IMR-90 (cell line): ENCODE measurements at regions of chr11 and their contacts with region 1.

Region 1: DNA sequence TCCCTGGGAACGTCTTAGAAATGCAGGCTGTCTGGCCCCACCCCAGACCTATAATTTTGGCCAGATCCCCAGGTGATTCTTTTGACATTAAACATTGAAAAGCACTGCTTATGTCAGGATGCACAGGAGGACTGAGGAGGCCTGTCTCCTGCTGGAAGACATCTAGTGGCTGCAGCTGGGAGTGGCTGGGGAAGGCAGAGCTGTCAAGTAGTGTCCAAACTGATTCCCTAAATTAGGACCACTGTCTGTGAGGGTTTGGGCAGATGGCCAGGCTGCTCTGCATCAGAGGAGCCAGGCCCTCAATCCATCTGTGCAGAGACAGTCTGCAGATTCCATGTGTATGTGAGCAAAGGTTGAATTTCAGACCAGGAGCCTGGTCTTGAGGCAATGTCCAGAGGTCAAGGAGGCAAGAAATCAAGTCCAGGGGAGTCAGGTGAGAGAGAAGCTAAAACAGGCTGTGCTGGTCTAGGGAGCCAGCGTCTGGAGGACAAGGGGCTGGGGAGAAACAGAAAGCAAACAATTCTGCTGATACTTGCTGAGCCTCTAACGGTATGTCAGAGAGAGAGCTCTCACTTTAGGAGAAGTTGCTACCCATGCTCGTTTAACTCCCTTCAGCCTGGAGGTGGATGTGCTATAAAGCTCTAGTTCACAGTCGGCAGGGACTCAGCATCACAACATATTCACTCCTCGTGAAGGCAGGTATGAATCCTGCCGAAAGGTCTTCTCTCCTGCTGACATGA is 15.3 kb upstream of the SYTL2 start:
- DNase-seq: peak; percentile 47
- ATAC-seq: peak; percentile 44; the same call in 1 of the 2 replicates
- H3K4me3 ChIP-seq: no peak overlapping the region
- H3K27ac ChIP-seq: peak overlapping the region; percentile 51
- H3K4me1 ChIP-seq: peaks cover 34% of the 10 kb centered on the region
- H3K27me3 ChIP-seq: no peaks in the 10 kb centered on the region
- CTCF ChIP-seq: peak; percentile 47
- POLR2A ChIP-seq: no peak
- RAD21 ChIP-seq: peak; percentile 54

Region 2: DNA sequence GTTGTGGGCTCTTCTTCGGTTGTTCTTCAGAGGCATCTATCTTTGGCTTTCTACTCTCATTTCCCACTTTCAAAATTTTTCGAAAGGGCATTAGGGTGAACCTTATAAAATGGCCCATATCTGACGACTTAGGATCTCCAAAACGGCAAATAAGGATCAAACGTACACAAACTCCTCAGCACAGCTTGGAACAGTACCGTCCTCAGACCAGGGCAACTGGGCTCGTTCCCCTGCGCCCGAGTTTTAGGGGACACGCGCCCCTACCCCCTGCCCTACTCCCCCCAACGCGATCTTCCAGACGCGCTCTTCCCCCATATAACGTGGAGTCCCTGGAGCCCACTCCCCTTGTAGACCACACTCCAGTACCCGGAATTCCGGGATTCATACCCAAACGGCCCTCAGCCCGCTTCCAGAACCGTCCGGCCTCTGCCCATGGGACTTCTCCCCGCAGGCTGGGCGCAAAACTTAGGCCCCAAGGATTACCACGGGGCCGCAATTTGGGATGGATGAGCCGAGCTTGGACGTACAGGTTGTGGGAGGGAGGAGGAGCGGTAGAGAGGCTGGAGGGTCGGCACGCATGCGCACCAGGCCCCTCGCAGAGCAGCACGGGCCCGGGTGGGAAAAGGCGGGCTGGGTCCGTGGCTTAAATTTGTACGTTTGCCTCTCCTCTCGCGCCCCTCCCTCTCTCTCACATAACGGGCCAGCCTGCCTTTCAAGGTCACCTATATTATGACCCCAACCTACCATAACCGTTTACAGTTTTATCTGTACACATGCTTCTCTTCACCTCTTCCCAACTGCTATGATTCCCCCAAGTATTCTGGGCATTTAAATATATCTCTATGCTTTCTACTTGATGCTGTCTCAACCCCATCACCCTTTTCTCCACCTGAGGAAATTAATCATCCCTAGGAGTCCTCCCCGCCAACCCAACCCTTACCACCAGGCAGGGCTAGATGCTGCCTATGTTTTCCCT is 143.7 kb before region 1 on chr11:
- CTCF ChIA-PET with region 1: interaction called, 3 read pairs
- POLR2A ChIA-PET with region 1: no interaction called
- dilution Hi-C with region 1: no loop called
- in situ Hi-C with region 1: loop called (anchors 10 kb)
- intact Hi-C with region 1: no loop called
- DNase-seq: peak; percentile 47
- ATAC-seq: peak; percentile 24; the same call in 1 of the 2 replicates
- H3K4me3 ChIP-seq: peak overlapping the region; percentile 89
- H3K27ac ChIP-seq: peak overlapping the region; percentile 78
- H3K4me1 ChIP-seq: peaks cover 2% of the 10 kb centered on the region; the same call in 1 of the 2 replicates
- H3K27me3 ChIP-seq: no peaks in the 10 kb centered on the region
- CTCF ChIP-seq: no peak
- POLR2A ChIP-seq: no peak
- RAD21 ChIP-seq: no peak

Region 3: DNA sequence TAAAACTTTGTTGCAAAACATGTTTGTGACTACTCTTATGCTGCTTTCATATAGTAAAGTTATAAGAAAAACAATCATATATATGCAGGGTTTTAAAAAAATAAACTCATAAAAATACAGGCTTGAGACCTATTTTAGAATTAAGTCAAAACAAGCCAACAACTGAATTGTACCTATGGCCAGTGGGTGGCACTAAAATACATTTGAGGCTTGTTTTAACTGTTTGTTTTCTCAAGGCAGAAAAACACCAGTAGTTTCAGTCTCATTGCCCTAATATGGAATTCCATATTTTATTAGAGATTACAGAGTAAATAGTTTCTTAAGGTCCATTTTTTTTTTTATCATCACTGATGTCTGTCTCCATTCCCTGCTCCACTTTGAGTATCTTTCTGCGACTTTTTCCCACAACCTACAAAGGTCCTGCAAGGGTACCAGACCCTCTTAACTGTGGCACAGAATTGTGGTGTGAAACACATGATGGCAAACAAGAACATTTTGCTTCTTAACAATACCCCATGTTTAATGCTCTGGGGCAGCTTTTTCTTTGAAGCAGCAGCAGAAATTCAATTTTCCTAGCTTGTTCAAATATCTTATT is 131.8 kb before region 1 on chr11:
- CTCF ChIA-PET with region 1: no interaction called
- POLR2A ChIA-PET with region 1: no interaction called
- dilution Hi-C with region 1: no loop called
- in situ Hi-C with region 1: loop called (anchors 10 kb)
- intact Hi-C with region 1: loop called (anchors 2 kb)
- DNase-seq: peak; percentile 71
- ATAC-seq: peak; percentile 69
- H3K4me3 ChIP-seq: no peak overlapping the region
- H3K27ac ChIP-seq: peak overlapping the region; percentile 63; the same call in 1 of the 2 replicates
- H3K4me1 ChIP-seq: peaks cover 6% of the 10 kb centered on the region
- H3K27me3 ChIP-seq: no peaks in the 10 kb centered on the region
- CTCF ChIP-seq: peak; percentile 67
- POLR2A ChIP-seq: no peak
- RAD21 ChIP-seq: peak; percentile 77

Region 4: DNA sequence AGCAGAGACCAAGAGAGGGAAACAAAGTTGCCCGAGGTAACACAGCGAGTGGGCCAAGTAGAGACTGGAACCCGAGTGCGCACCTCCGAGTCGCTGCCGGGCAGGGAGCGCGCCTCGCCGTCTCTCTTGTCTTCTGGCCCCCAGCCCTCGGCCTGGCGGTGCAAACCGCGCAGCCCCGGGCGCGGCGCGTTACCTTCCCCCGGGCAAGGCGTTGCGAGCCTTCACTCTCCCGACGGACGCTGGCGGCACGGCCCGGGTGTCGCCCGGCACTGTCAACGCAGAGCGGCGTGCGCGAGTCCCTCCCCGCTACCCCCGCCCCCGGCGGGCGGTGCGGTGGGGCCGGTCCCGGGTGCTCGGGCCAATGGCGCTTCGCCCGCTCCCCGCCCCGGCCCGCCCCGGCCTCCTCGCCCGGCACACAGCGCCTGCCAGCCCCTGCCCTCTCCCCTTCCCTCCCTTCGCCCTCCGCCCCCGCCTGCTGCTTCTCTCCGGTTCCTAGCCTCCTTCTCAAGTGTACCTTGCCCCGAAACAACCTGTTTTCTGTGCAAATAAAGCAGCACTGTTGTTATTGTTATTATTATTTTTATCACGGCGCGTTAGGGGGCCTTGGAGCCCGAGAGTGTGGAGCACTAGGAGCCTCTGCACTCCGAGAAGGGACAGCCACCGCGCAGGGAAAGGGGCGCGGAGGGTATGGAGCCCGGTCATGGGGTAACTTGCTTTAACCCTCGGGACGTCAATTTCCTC is 15.2 kb before region 1 on chr11 and contains the start of gene SYTL2:
- CTCF ChIA-PET with region 1: interaction called, 17 read pairs
- POLR2A ChIA-PET with region 1: no interaction called
- dilution Hi-C with region 1: no loop called
- in situ Hi-C with region 1: no loop called
- intact Hi-C with region 1: no loop called
- DNase-seq: peak; percentile 48
- ATAC-seq: peak; percentile 90
- H3K4me3 ChIP-seq: peak within 1 kb of the TSS; percentile 75
- H3K27ac ChIP-seq: peak within 1 kb of the TSS; percentile 40
- H3K4me1 ChIP-seq: peaks cover 16% of the 10 kb centered on the region
- H3K27me3 ChIP-seq: no peaks in the 10 kb centered on the region
- CTCF ChIP-seq: peak; percentile 3; the same call in 1 of the 2 replicates
- POLR2A ChIP-seq: peak; percentile 24; the same call in 1 of the 2 replicates
- RAD21 ChIP-seq: no peak
- total RNA-seq, gene SYTL2: 45.2 and 59.4 TPM in 2 replicates

Region 5: GRCh38 chr11:85977751-85978160 is 151.5 kb after region 1 on chr11:
- CTCF ChIA-PET with region 1: no interaction called
- POLR2A ChIA-PET with region 1: no interaction called
- dilution Hi-C with region 1: no loop called
- in situ Hi-C with region 1: no loop called
- intact Hi-C with region 1: no loop called
- DNase-seq: no peak
- ATAC-seq: no peak
- H3K4me3 ChIP-seq: no peak overlapping the region
- H3K27ac ChIP-seq: no peak overlapping the region
- H3K4me1 ChIP-seq: peaks cover 2% of the 10 kb centered on the region
- H3K27me3 ChIP-seq: no peaks in the 10 kb centered on the region
- CTCF ChIP-seq: no peak
- POLR2A ChIP-seq: no peak
- RAD21 ChIP-seq: no peak